Left colon (tissue), 2 donors: ENCODE measurements at regions of chr1 and their contacts with region 1.

Region 1: DNA sequence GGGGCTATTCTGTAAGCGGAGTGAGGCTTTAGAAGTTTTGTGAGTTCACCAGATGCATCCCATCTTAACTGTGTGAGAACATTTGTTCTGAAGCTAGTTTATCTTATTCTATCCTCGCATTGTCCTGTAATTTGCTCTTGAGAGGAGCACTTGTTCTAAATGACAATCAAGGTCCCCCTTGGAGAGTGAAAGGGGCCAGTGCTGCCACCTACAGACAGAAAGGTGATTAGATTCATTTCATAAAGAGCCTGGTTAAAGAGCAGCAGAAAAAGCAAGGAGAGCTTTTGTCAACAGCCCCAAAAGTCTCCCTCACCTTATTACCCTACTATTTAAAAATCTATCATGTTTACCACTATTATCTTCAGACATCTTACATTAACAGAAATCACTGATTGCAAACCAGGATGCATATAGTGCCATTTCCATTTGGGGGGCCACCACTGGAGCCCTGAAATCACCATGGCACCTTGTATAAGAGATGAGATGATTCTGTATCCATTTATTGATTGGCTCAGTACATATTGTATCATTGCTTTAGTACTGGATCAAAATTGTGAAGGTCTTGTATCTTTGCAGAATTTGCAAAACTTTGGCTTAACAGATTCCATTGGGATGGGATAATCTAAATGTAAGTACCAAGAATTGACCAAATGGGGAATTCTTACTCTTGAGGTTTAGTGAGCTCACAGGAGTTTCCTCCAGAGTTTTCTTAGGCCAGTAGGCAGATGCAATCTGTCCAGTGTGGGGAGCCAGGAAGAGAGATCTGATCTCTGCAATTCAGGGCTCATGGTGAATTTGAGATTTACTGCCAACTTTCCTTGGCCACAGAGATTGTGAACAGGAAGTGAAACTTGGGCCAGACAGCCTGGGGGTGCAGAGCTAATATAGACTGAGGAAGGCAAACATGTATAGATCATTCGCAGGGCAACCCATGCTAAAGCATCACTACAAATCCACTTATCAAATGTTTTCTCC is 64.3 kb upstream of the TRABD2B start:
- DNase-seq: peak in 1 of 2 donors; percentile 64
- ATAC-seq: peak; percentile 70

Region 2: DNA sequence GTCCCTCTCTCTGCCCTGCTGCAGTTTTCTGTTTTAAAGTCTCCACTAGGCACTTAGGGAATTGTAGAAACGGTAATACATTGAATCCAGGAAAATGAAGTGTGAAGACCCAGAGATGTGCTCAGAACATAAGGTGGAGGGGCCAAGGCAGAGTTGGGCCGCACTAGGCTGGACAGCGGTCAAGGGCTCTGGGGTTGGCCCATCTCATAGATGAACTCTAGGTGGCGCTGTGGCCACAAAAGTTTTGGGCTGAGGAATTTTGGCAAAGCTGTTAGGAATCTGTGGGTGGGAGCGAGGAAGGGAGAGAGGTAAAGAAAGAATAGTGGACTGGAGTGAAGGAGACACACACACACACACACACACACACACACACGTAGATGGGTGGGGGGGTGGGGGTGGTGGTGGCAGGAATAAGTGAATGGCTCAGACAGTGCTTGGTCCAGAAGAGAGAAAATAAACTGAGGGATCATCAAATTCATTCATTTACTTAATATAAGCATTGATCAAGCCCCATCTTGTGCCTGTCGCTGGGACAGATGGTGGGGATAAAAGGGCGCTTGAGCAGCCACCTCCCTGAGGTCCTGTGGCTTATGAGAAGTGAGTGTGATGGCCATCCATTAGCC is 322.8 kb before region 1 on chr1:
- intact Hi-C with region 1: loop called in 1 of 2 experiments (anchors 5 kb)
- DNase-seq: peak in 1 of 2 donors; percentile 67
- ATAC-seq: peak; percentile 75

Region 3: DNA sequence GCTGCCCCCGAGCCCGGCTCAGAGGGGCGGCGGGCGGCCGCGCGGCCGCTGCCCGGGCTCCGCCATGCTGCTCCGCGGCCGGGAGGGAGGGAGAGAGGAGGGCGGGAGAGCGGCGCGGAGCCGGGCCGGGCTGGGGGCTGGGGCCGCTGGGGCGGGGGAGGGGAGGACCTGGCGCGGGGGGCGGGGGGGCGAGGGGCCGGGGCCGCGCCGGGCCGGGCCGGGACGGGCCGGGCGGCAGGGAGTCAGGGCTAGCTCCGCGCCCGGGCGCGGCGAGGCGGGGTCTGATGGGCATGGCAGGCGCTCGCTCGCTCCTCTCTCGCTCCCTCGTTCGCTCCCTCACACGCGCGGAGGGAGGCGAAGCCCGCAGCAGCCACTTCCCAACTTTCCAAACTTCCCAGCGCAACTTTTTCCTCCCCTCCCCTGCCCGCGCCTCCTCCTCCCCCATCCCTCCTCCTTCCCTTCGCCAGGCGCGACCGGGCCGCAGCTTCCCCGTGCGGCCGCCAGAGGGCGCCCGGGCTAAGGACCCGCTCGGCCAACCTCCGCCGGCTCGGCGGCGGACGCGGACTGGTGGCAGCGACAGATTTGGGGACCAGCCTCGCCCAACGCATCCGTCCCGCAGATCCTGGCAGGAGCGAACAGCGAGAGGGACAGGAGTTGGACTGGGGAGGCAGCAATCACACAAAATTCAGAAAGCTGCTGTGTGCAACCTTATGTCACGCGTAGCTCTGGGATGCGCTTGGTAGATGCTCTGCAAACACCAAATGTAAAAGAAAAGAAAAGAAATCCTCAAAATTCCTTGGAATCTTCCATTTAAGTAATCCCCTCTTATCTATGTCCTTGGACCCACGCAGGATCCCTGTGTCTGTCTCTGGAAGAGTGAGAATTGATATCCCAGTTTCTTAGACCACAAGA is 63.9 kb before region 1 on chr1 and contains the start of gene TRABD2B:
- intact Hi-C with region 1: loop called in 1 of 2 experiments (anchors 2 kb)
- DNase-seq: peak; percentile 48 to 78
- ATAC-seq: peak; percentile 91
- total RNA-seq, gene TRABD2B: 0.70 to 1.0 TPM

Region 4: GRCh38 chr1:48236716-48237470 is 175.4 kb after region 1 on chr1:
- intact Hi-C with region 1: no loop called
- DNase-seq: no peak
- ATAC-seq: peak; percentile 83